ENCODE measurements at regions of chr7 and their contacts with region 1.

Region 1: DNA sequence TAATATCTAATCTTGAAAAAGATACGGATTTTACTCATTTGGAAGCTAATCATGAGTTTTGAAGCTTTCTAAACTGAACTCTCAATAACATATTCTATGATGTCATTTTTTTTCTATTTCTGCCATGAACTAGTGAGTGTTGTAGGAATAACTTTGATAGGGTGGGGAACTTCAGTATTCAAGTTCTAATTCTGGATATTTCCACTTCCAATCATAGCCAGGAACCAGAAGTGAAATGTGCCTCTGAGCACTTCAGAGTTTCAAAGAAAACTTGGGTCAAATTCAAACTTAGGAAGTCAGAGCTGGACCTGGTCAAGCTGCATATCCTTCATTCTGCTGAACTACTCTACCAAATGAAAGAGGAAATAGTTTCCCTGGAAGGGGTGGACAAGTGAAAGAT is 847 bp downstream of the AGMO start:
- DNase-seq: no peak
- H3K4me3 ChIP-seq: no peak overlapping the region
- H3K27ac ChIP-seq: no peak overlapping the region
- H3K4me1 ChIP-seq: peaks cover 15% of the 10 kb centered on the region
- H3K27me3 ChIP-seq: no peaks in the 10 kb centered on the region
- CTCF ChIP-seq: no peak

Region 2: GRCh38 chr7:15007507-15007906 is 553.5 kb before region 1 on chr7:
- CTCF ChIA-PET with region 1: no interaction called
- POLR2A ChIA-PET with region 1: no interaction called
- intact Hi-C with region 1: no loop called
- DNase-seq: peak; percentile 25
- H3K4me3 ChIP-seq: no peak overlapping the region
- H3K27ac ChIP-seq: no peak overlapping the region
- H3K4me1 ChIP-seq: no peaks in the 10 kb centered on the region
- H3K27me3 ChIP-seq: no peaks in the 10 kb centered on the region
- CTCF ChIP-seq: peak; percentile 53

Region 3: GRCh38 chr7:15291702-15292101 is 269.3 kb before region 1 on chr7:
- CTCF ChIA-PET with region 1: interaction called, 11 read pairs
- POLR2A ChIA-PET with region 1: no interaction called
- intact Hi-C with region 1: no loop called
- DNase-seq: peak; percentile 12
- H3K4me3 ChIP-seq: no peak overlapping the region
- H3K27ac ChIP-seq: no peak overlapping the region
- H3K4me1 ChIP-seq: no peaks in the 10 kb centered on the region
- H3K27me3 ChIP-seq: peaks cover 8% of the 10 kb centered on the region
- CTCF ChIP-seq: no peak; the same call in 1 of the 2 replicates

Region 4: GRCh38 chr7:15780271-15780670 is 219.3 kb after region 1 on chr7:
- CTCF ChIA-PET with region 1: no interaction called
- POLR2A ChIA-PET with region 1: no interaction called
- intact Hi-C with region 1: no loop called
- DNase-seq: peak; percentile 29
- H3K4me3 ChIP-seq: no peak overlapping the region
- H3K27ac ChIP-seq: no peak overlapping the region
- H3K4me1 ChIP-seq: peaks cover 7% of the 10 kb centered on the region
- H3K27me3 ChIP-seq: no peaks in the 10 kb centered on the region
- CTCF ChIP-seq: no peak

Measured in A673 (cell line).